Right cardiac atrium (tissue), 5 donors: ENCODE measurements at regions of chr18 and their contacts with region 1.

Region 1: DNA sequence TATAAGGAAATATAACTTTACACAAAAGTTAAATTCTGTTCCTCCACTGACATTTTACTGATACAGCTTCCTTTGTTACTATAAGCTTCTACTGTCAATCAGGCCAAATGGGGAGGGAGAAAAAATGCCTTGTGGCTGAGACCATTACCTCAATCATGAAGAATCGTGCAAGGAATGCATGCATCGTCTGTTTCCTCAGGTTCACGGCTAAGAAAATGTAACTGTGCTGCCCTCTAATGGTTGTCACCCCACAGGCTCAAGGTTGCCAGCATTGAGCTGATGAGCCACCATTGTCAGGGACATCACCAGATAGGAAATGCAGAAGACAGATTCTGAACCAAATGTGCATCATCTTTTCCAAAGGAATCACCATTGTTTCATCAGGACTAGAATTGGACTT is 426.9 kb downstream of the CDH2 start:
- DNase-seq: peak in 2 of 3 donors; percentile 13 to 16
- ATAC-seq: peak; percentile 55 to 76
- H3K4me3 ChIP-seq: no peak overlapping the region
- H3K27ac ChIP-seq: no peak overlapping the region
- H3K4me1 ChIP-seq: no peaks in the 10 kb centered on the region
- H3K27me3 ChIP-seq: no peaks in the 10 kb centered on the region

Region 2: DNA sequence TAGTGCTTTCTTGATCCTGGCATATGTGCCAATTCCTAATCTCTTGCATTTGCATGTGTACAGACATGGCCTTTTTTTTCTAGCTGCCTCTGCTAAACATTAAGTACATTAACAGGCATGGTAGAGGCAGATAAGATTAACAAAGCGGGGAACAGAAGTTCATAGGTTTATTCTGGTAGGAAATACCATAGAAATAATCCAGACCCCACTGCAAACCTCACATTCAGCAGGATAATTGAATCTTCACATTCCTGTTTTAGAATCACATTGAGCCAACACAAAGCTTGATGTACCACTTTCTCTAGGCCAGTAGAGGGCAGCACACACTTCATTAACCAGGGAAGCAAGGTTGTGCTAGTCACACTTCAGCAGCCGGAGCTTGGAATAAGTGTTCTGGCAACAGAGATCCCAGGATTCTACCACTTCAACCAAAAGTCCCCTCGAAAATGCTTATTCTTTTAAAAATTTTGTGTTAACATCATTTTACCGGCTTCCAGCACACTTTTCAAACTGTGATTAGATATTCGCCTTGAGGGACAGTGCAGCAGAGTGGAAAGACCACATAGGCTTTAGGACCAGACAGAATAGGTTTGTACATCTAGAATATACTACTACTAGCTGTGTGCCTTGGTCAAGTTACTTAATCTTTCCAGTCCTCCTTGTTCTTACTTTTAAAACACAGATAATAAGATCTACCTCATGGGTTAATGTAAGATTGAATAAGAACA is 144.7 kb before region 1 on chr18:
- intact Hi-C with region 1: loop called (anchors 2 to 10 kb)
- DNase-seq: peak; percentile 16 to 30 (median 29)
- ATAC-seq: peak; percentile 81 to 84
- H3K4me3 ChIP-seq: no peak overlapping the region
- H3K27ac ChIP-seq: no peak overlapping the region
- H3K4me1 ChIP-seq: no peaks in the 10 kb centered on the region
- H3K27me3 ChIP-seq: no peaks in the 10 kb centered on the region

Region 3: DNA sequence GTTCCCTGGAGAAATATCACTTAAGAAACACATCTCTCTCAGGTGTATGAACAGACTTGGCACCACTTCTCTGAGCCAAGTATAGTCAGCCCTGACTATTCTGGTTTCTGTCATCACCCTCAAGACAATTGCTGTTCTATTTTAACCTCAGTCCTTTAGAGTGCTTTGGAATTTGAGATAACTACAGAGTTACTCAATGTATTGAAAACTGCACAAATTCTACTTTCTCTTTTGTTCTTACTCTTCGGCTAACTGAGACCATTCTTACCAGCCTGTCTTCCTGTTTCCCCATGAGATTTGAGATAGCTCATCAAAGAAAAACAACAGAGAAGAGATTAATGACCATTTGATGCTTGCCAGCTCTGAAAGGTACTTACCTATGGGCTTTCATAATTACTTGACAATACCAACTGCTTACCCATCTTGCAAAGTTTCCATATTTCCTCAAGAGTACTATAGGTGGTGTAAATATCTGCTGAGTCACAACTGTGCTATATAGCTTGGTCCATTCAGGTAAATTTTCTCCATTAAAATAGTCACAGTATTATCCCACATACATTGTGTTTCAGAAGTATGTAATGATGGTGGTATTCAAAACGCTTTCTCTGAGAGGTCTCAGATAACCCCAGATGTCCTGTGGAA is 97.4 kb before region 1 on chr18:
- intact Hi-C with region 1: no loop called
- DNase-seq: no peak
- ATAC-seq: peak; percentile 47 to 80
- H3K4me3 ChIP-seq: no peak overlapping the region
- H3K27ac ChIP-seq: no peak overlapping the region
- H3K4me1 ChIP-seq: no peaks in the 10 kb centered on the region
- H3K27me3 ChIP-seq: no peaks in the 10 kb centered on the region

Region 4: GRCh38 chr18:27685807-27686412 is 64.1 kb before region 1 on chr18:
- intact Hi-C with region 1: loop called in 1 of 4 experiments (anchors 10 kb)
- DNase-seq: peak in 2 of 3 donors; percentile 14 to 49
- ATAC-seq: no peak
- H3K4me3 ChIP-seq: no peak overlapping the region
- H3K27ac ChIP-seq: no peak overlapping the region
- H3K4me1 ChIP-seq: no peaks in the 10 kb centered on the region
- H3K27me3 ChIP-seq: no peaks in the 10 kb centered on the region